ENCODE measurements at regions of chr5 and their contacts with region 1.

Region 1: DNA sequence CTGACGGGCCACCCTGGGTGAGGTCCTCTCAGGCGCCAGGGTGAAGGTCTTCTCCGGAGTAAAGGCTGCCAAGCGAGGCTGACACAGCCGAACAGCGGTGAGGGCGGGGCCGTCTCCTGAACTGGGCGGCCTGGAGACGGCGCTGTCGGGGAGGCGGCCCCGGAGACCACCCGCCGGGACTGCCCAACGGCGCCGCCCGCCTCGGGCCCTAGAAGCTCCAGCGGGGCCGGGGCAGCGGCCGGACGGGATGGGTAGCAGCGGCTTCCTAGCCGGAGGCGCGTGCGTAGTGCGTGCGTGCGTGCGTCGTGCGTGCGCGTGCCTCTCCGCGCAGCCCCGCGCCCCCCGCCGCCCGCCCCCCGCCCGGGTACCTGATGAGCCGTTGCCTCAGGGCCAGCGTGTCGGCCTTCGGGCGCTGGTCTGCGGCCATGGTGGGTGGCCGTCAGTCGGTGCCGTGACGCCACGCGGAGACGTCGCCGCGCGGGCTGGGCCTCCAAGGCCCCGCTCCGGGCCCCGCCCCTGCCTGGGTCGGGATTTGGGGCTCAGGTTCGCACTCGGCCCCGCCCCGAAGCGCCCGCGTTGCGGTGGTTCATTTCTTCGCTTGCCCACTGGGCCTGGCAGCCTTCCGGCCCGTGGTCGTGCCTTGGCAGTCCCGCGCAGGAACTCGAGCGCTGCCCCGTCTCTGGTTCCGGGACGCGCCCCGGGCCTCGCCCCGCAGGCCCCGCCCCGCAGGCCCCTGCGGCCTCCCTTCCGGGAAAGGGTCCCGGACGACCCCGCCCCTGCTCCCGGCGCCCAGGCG is at the start of gene PHYKPL:
- DNase-seq: peak; percentile 71
- H3K4me3 ChIP-seq: peak within 1 kb of the TSS; percentile 49 to 90 (median 65)
- H3K27ac ChIP-seq: peak within 1 kb of the TSS; percentile 54
- H3K4me1 ChIP-seq: peaks cover 16% of the 10 kb centered on the region
- H3K27me3 ChIP-seq: no peaks in the 10 kb centered on the region
- CTCF ChIP-seq: peak in 1 of 2 donors; percentile 7
- POLR2A ChIP-seq: peak; percentile 87
- total RNA-seq, gene PHYKPL: 80.5 and 81.7 TPM in 2 replicates

Region 2: DNA sequence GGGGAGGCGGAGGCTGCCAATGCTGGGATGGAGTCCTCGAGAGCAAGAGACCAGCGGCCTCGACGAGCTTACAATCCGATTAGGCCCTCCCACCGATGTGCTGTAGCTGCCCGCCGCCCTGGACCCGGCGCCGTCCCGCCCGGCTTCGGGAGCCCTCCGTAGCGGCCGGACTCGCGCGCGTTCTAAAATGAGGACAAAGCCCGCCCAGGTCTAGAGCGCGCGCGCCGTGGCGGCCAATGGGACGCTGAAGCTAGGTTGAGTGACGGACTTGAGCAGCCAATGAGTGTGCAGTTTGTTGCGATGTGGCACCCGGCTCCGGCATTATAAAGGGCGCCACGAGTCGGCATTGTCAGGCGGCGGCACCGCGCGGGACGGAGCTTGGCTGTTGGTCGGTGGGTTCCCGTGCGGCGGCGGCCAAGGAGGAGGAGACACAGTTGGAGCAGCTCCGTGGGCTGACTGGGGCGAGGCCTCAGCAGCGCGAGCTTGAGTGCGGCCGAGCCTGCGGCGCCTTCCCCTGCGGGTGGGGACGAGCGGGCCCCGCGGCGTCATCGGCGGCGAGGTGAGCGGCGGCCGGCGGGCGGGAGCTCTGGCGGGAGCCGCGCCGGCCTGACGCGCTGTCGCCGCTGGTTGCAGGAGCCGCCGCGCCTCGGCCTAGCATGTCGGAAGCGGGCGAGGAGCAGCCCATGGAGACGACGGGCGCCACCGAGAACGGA is 28.0 kb before region 1 on chr5 and contains the start of gene HNRNPAB:
- CTCF ChIA-PET with region 1: interaction called, 5 read pairs
- POLR2A ChIA-PET with region 1: interaction called, 3 read pairs
- dilution Hi-C with region 1: no loop called
- intact Hi-C with region 1: loop called (anchors 2 kb)
- DNase-seq: peak; percentile 96
- H3K4me3 ChIP-seq: peak within 1 kb of the TSS; percentile 66 to 93 (median 81)
- H3K27ac ChIP-seq: peak within 1 kb of the TSS; percentile 65
- H3K4me1 ChIP-seq: peaks cover 22% of the 10 kb centered on the region
- H3K27me3 ChIP-seq: no peaks in the 10 kb centered on the region
- CTCF ChIP-seq: no peak
- POLR2A ChIP-seq: peak; percentile 100
- total RNA-seq, gene HNRNPAB: 309 and 310 TPM in 2 replicates

Region 3: GRCh38 chr5:178279725-178280438 is 47.6 kb after region 1 on chr5:
- CTCF ChIA-PET with region 1: interaction called, 8 read pairs
- POLR2A ChIA-PET with region 1: no interaction called
- dilution Hi-C with region 1: no loop called
- intact Hi-C with region 1: loop called (anchors 1 kb)
- DNase-seq: peak; percentile 70
- H3K4me3 ChIP-seq: no peak overlapping the region
- H3K27ac ChIP-seq: no peak overlapping the region
- H3K4me1 ChIP-seq: no peaks in the 10 kb centered on the region
- H3K27me3 ChIP-seq: no peaks in the 10 kb centered on the region
- CTCF ChIP-seq: peak; percentile 94 to 97
- POLR2A ChIP-seq: no peak

Region 4: DNA sequence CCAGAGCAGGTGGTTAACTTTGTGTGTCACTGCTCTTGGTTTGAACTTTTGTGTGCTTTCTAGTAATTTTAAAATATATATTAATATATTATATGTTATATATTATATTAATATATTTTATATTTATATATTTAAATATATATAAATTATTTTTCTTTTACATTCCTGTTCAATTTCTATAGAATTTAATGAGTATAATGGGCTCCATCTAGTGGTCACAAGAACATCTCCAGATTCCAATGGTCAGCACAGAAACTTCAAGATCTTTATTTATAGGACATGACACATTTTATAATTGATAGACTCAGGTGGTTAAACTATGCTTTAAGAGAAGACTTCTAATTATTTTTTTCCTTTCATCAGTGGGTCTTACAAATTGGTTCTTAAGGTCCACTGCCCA is 318.7 kb after region 1 on chr5:
- CTCF ChIA-PET with region 1: interaction called, 6 read pairs
- POLR2A ChIA-PET with region 1: no interaction called
- dilution Hi-C with region 1: no loop called
- intact Hi-C with region 1: loop called (anchors 1 kb)
- DNase-seq: peak; percentile 28
- H3K4me3 ChIP-seq: no peak overlapping the region
- H3K27ac ChIP-seq: no peak overlapping the region
- H3K4me1 ChIP-seq: peaks cover 5% of the 10 kb centered on the region
- H3K27me3 ChIP-seq: no peaks in the 10 kb centered on the region
- CTCF ChIP-seq: peak in 1 of 2 donors; percentile 22
- POLR2A ChIP-seq: no peak

Region 5: DNA sequence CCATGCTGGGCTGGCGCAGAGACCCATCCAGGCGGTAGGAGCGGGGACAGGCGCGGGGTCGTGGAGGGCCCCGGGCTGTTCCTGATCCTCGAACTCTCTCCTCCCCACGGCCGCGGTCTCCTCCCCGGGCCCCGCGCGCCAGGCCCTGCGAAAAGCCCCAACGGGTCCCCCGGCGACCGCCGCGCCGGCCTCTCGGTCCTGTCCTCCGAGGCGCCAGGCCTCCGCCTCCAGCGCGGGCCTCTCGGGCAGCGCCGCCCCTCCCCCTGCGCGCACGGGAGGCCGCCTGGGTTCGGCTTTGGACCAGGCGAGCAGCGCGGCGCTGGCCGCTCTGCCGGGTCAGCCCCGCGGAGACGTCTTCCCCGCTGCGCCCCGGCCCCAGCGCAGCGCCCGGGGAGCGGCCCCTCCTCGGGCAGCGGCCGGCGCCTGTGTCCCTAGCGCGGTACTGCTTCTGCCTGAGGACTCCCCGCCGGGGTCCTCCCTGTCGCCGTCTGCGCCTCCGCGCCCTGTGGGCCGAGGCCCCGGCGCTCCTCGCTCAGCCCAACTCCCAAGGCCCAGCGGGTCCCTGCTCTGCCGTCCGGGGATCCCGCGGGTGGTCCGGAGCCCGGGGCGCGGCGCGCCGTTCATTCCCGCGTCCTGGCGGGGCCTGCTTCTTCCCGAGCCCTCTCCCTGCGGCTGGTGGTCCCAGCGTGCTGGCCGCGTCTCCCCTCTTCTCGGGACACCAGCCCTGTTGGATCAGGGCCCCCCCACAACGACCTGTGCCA is 344.4 kb after region 1 on chr5:
- CTCF ChIA-PET with region 1: no interaction called
- POLR2A ChIA-PET with region 1: no interaction called
- dilution Hi-C with region 1: no loop called
- intact Hi-C with region 1: no loop called
- DNase-seq: no peak
- H3K4me3 ChIP-seq: no peak overlapping the region
- H3K27ac ChIP-seq: no peak overlapping the region
- H3K4me1 ChIP-seq: no peaks in the 10 kb centered on the region
- H3K27me3 ChIP-seq: peaks cover 5 to 7% of the 10 kb centered on the region in 2 experiments
- CTCF ChIP-seq: no peak
- POLR2A ChIP-seq: no peak

Region 6: DNA sequence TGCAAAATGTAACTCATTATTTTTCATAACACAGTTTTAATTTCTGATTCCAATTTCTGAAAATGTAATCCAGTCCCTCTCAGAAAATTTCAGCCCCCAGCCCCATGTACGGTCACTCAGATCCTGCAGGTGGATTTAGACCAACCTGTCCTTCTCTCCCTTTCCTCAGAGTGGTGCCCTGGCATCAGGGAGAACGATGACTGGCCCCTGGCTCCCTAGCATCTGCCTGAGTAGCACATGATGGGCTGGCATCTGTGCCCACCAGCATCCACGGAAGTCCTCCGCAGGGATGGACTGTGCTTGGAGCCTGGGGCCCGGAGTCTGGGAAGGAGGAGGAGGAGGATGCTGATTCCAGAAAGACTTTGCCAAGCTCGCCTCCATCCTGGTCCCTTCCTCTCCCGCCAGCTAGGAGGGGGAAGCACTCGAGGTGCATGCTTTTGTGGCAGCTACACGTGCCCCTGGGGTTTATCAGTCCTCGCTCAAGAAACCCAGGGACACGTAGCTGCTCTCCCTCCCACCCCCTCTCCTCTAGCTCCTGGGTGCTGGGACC is 1263.7 kb after region 1 on chr5:
- CTCF ChIA-PET with region 1: interaction called, 19 read pairs
- POLR2A ChIA-PET with region 1: no interaction called
- dilution Hi-C with region 1: no loop called
- intact Hi-C with region 1: no loop called
- DNase-seq: no peak
- H3K4me3 ChIP-seq: no peak overlapping the region
- H3K27ac ChIP-seq: no peak overlapping the region
- H3K4me1 ChIP-seq: no peaks in the 10 kb centered on the region
- H3K27me3 ChIP-seq: no peaks in the 10 kb centered on the region
- CTCF ChIP-seq: no peak
- POLR2A ChIP-seq: no peak

Measured in endothelial cell of umbilical vein (primary cell).